Right cardiac atrium (tissue), 5 donors: ENCODE measurements at regions of chr17 and their contacts with region 1.

Region 1: GRCh38 chr17:57987580-57988421 is at the start of gene VEZF1:
- DNase-seq: peak; percentile 80 to 94 (median 93)
- ATAC-seq: peak; percentile 77 to 79
- H3K4me3 ChIP-seq: peak within 1 kb of the TSS; percentile 98
- H3K27ac ChIP-seq: peak within 1 kb of the TSS; percentile 90
- H3K4me1 ChIP-seq: peaks cover 2% of the 10 kb centered on the region
- H3K27me3 ChIP-seq: no peaks in the 10 kb centered on the region
- total RNA-seq, gene VEZF1: 67.4 to 74.6 (median 68.5) TPM

Region 2: DNA sequence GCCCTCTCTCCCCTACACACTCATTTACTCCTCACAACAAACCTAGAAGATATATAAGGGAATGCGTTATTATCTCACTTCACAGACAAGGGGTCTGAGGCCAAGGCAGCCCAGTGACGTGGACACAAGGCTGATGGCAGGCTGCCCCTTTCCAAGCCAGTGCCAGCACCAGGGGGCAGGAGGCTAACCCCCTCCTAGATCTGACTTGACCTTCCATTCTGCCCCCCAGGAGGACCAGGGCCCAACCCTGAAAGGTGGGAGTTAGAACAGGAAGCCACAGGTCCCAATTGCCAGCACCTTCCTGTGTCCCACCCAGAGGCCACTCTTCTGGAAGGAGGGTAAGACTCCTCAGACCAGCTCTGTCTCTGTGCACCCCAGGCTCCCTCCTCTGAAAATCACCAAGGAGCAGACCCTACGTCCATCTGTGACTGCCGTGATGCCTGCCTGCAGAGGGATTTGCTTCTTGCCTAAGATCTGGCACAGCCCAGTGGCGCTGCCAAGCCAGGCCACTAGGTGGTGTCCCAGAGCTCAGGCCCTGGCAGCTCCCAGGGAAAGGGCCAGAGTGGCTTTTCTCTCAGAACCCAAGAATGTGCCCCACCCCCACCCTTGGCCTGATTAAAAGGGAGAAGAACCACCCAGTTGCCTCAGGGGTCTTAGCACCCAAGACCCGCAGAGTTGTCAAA is 95.5 kb before region 1 on chr17:
- intact Hi-C with region 1: loop called in 2 of 4 experiments (anchors 5 kb)
- DNase-seq: peak; percentile 84 to 97 (median 96)
- ATAC-seq: peak; percentile 58 to 74
- H3K4me3 ChIP-seq: no peak overlapping the region
- H3K27ac ChIP-seq: peak overlapping the region; percentile 100
- H3K4me1 ChIP-seq: peaks cover 42% of the 10 kb centered on the region
- H3K27me3 ChIP-seq: no peaks in the 10 kb centered on the region

Region 3: DNA sequence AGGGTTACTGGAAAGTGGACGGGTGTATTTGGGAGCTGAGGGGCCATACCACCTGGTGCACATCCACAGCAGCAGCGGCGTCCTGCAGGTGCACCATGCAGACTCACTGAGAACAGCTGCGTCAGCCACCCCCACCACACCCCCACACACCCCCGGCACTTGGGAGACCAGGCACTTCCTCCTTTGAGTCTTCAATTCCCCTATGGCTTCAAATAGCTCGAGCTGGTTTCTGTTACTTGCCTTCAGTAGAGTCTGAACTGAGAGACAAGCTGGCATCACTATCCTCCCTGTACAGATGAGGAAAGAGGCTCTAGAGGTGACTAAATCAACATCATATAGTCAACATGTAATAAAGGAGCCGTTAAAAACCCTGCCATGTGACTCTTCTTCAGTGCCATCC is 48.0 kb before region 1 on chr17:
- intact Hi-C with region 1: loop called in 1 of 4 experiments (anchors 10 kb)
- DNase-seq: peak in 2 of 3 donors; percentile 66 to 76
- ATAC-seq: no peak
- H3K4me3 ChIP-seq: no peak overlapping the region
- H3K27ac ChIP-seq: peak overlapping the region; percentile 78
- H3K4me1 ChIP-seq: peaks cover 31% of the 10 kb centered on the region
- H3K27me3 ChIP-seq: no peaks in the 10 kb centered on the region

Region 4: GRCh38 chr17:57955183-57955931 is 32.4 kb before region 1 on chr17 and contains the start of gene CUEDC1:
- intact Hi-C with region 1: loop called in 1 of 4 experiments (anchors 5 kb)
- DNase-seq: peak; percentile 86 to 95 (median 95)
- ATAC-seq: peak; percentile 76 to 78
- H3K4me3 ChIP-seq: peak within 1 kb of the TSS; percentile 99
- H3K27ac ChIP-seq: peak within 1 kb of the TSS; percentile 98
- H3K4me1 ChIP-seq: peaks cover 23% of the 10 kb centered on the region
- H3K27me3 ChIP-seq: no peaks in the 10 kb centered on the region
- total RNA-seq, gene CUEDC1: 53.1 to 60.5 (median 55.1) TPM